ENCODE measurements at regions of chr17 and their contacts with region 1.

Region 1: GRCh38 chr17:50087246-50087911 is 7.8 kb upstream of the PDK2 start:
- DNase-seq: peak; percentile 64
- H3K4me3 ChIP-seq: no peak overlapping the region
- H3K27ac ChIP-seq: no peak overlapping the region
- H3K4me1 ChIP-seq: no peaks in the 10 kb centered on the region
- H3K27me3 ChIP-seq: no peaks in the 10 kb centered on the region
- CTCF ChIP-seq: peak; percentile 96
- POLR2A ChIP-seq: no peak

Region 2: GRCh38 chr17:49861150-49861892 is 226.1 kb before region 1 on chr17:
- CTCF ChIA-PET with region 1: interaction called, 6 read pairs
- POLR2A ChIA-PET with region 1: no interaction called
- dilution Hi-C with region 1: no loop called
- intact Hi-C with region 1: loop called (anchors 2 kb)
- DNase-seq: peak; percentile 30
- H3K4me3 ChIP-seq: no peak overlapping the region
- H3K27ac ChIP-seq: no peak overlapping the region
- H3K4me1 ChIP-seq: no peaks in the 10 kb centered on the region
- H3K27me3 ChIP-seq: peaks cover 3% of the 10 kb centered on the region in 2 experiments
- CTCF ChIP-seq: peak; percentile 57 to 78
- POLR2A ChIP-seq: no peak

Region 3: DNA sequence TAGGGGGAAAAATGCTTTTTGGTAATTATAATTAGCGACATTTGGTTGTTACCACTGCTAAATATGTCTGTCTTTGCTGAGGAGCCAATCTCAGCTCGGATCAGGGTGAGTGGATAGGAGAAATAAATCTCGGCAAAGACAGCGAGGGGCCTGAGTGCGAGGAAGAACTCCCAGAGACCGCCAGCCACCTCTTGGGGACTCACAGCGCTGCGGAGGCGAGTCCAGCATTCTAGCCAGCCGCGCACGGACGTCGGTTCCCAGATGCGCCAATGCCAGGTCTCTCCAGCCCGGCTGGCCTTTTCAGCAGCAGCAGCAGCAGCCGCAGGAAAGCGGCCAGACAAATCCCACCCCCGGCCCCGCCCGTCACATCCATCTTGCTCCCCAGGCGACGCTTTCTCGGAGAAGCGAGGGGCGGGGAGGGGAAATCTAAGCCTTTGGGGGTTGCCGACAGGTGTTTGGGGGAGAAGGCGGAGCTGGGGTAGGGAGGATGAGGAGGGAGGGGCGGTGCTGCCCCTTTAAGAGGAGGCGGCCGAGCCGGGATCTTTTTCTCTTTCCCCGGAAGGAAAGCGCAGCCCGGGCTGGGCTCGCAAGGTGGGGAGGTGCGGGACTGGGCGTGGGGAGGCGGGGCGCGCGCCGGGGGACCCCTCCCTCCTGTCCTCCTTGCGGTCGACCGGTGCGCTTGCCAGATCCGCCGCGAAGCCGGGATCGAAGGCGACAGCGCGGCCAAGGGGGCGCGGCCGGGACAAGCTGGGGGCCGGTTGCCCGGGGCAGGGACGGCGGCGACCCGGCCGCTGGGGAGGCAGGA is 31.8 kb before region 1 on chr17 and contains the start of gene ITGA3:
- CTCF ChIA-PET with region 1: interaction called, 55 read pairs
- POLR2A ChIA-PET with region 1: no interaction called
- dilution Hi-C with region 1: no loop called
- intact Hi-C with region 1: loop called (anchors 1 kb)
- DNase-seq: peak; percentile 80
- H3K4me3 ChIP-seq: peak within 1 kb of the TSS; percentile 65 to 77 (median 77)
- H3K27ac ChIP-seq: peak within 1 kb of the TSS; percentile 39
- H3K4me1 ChIP-seq: peaks cover 65% of the 10 kb centered on the region
- H3K27me3 ChIP-seq: no peaks in the 10 kb centered on the region
- CTCF ChIP-seq: no peak
- POLR2A ChIP-seq: peak; percentile 57
- total RNA-seq, gene ITGA3: 93.8 and 112 TPM in 2 replicates

Region 4: GRCh38 chr17:50064258-50065001 is 22.9 kb before region 1 on chr17:
- CTCF ChIA-PET with region 1: interaction called, 14 read pairs
- POLR2A ChIA-PET with region 1: no interaction called
- dilution Hi-C with region 1: no loop called
- intact Hi-C with region 1: no loop called
- DNase-seq: peak; percentile 82
- H3K4me3 ChIP-seq: no peak overlapping the region
- H3K27ac ChIP-seq: peak overlapping the region; percentile 63
- H3K4me1 ChIP-seq: peaks cover 38% of the 10 kb centered on the region
- H3K27me3 ChIP-seq: no peaks in the 10 kb centered on the region
- CTCF ChIP-seq: no peak
- POLR2A ChIP-seq: no peak

Region 5: GRCh38 chr17:50072925-50073324 is 14.5 kb before region 1 on chr17:
- CTCF ChIA-PET with region 1: interaction called, 44 read pairs
- POLR2A ChIA-PET with region 1: no interaction called
- dilution Hi-C with region 1: no loop called
- intact Hi-C with region 1: no loop called
- DNase-seq: no peak
- H3K4me3 ChIP-seq: no peak overlapping the region
- H3K27ac ChIP-seq: no peak overlapping the region
- H3K4me1 ChIP-seq: no peaks in the 10 kb centered on the region
- H3K27me3 ChIP-seq: no peaks in the 10 kb centered on the region
- CTCF ChIP-seq: no peak
- POLR2A ChIP-seq: no peak